Transverse colon (tissue), 4 donors: ENCODE measurements at regions of chr5 and their contacts with region 1.

Region 1: GRCh38 chr5:172984243-172984953 is 827 bp downstream of the ATP6V0E1 start:
- DNase-seq: peak; percentile 74
- H3K4me3 ChIP-seq: peak overlapping the region; percentile 52 to 94 (median 76)
- H3K27ac ChIP-seq: peak overlapping the region; percentile 94 to 97 (median 95)
- H3K4me1 ChIP-seq: peaks cover 0 to 27% (median 9%) of the 10 kb centered on the region in 4 donors
- H3K27me3 ChIP-seq: no peaks in the 10 kb centered on the region
- CTCF ChIP-seq: peak; percentile 34 to 64 (median 42)
- EP300 ChIP-seq: no peak
- POLR2A ChIP-seq: no peak

Region 2: GRCh38 chr5:172886974-172887501 is 97.4 kb before region 1 on chr5:
- in situ Hi-C with region 1: no loop called
- intact Hi-C with region 1: no loop called
- DNase-seq: peak; percentile 53
- H3K4me3 ChIP-seq: no peak overlapping the region
- H3K27ac ChIP-seq: peak overlapping the region; percentile 73 to 94 (median 84)
- H3K4me1 ChIP-seq: peaks cover 5 to 29% (median 9%) of the 10 kb centered on the region in 4 donors
- H3K27me3 ChIP-seq: no peaks in the 10 kb centered on the region
- CTCF ChIP-seq: no peak
- EP300 ChIP-seq: peak; percentile 40
- POLR2A ChIP-seq: no peak

Region 3: DNA sequence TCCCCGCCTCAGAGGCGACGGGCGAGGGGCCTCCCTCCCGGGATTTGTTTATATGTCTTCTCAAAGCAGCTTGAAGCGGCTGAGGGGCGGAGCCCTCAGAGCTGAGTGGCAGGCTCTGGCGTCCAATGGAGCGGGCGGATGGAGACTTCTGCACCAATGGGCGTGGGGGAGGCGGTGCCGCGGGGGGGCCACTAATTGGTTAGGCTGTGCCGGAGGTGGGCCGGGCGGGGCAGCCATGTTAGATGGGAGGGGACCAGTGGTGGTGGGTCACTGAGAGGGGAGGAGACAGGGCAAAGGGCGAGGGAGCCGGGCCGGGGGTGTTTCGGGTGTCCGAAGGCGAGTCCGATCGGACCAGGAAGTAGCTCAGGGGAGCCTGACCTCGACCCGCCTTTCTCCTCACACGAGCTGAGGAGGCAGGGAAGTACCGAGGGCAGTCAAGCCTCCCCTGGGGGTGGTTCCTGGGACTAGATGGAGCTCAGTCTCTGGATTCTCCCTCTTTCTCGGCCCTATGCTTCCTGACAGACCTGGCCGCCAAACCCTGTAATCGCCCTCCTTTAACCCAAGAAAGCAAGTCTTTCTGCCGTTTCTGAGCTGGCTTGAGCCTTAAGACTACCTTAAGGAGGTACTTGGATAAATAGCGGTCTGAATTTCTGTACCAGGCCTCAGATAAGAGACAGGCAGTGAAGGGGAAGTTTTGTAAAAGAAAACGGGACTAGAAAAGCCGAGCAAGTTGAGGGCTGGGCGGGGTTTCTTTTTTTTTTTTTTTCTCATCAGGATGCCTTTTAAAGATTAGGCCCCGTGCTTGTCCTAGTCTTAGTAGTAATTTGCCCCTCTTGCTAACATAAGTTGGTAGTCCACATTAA is 72.9 kb after region 1 on chr5:
- in situ Hi-C with region 1: no loop called
- intact Hi-C with region 1: loop called (anchors 5 kb)
- DNase-seq: peak; percentile 99
- H3K4me3 ChIP-seq: peak overlapping the region; percentile 82 to 99 (median 94)
- H3K27ac ChIP-seq: peak overlapping the region; percentile 92 to 100 (median 99)
- H3K4me1 ChIP-seq: peaks cover 6 to 46% (median 22%) of the 10 kb centered on the region in 4 donors
- H3K27me3 ChIP-seq: no peaks in the 10 kb centered on the region
- CTCF ChIP-seq: peak; percentile 8 to 54 (median 13)
- EP300 ChIP-seq: no peak
- POLR2A ChIP-seq: peak; percentile 49

Region 4: DNA sequence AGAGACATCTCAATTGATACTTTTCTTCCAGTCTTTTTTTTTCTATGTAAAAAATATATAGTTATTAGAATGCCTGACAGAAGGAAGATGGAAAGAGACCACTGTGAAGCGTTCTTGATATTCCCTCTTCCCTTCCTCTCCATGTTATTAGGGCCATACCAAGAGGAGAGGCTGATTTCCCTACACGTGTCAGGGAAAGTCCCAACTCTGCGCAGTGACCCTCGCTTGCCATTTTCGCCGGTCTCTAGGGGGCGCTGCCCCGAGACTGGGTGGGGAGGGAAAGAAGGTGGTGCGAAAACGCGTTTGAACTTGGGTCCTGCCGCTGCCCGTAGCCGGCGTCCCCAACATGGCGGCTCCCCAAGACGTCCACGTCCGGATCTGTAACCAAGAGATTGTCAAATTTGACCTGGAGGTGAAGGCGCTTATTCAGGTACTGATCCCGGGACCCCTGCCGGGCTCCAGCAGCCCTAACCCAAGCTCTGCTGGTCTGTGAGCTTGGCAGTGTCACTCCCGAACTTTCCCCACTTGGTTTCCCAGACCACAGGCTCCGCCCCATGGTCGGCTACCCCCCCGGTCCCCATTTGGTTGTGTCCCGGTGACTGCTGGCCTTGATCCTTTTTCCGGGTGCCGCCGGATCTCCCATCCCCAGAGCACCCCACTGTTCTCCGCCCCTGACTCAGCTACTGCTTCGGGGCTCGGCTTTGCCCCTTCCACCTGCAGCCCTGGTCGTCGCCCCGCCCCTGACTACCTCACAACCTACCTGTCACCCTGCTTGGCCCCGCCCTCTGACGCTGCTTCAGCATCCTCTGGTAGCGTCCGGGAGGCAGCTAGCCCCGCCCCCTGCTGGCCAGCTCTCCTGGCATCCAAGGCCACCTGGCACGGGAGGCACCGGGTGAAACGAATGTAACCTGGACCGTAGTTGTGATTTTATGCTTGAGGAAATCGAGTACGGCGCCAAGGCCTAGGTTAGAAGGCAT is 160.1 kb after region 1 on chr5 and contains the start of gene BNIP1:
- in situ Hi-C with region 1: loop called in 3 of 4 experiments (anchors 10 kb)
- intact Hi-C with region 1: loop called (anchors 10 kb)
- DNase-seq: peak; percentile 99
- H3K4me3 ChIP-seq: peak within 1 kb of the TSS; percentile 59 to 96 (median 77)
- H3K27ac ChIP-seq: peak within 1 kb of the TSS; percentile 87 to 95 (median 90)
- H3K4me1 ChIP-seq: peaks cover 0 to 13% (median 6%) of the 10 kb centered on the region in 4 donors
- H3K27me3 ChIP-seq: no peaks in the 10 kb centered on the region
- CTCF ChIP-seq: peak; percentile 86 to 97 (median 92)
- EP300 ChIP-seq: no peak
- POLR2A ChIP-seq: peak; percentile 75
- total RNA-seq, gene BNIP1: 6.0 to 7.2 TPM in 2 of 4 donors, not detected in the others